A549 (cell line): ENCODE measurements at regions of chr7 and their contacts with region 1.

Region 1: GRCh38 chr7:73612598-73613269 is 11.6 kb downstream of the MLXIPL start:
- DNase-seq: peak; percentile 97 to 98
- ATAC-seq: peak; percentile 95
- H3K4me3 ChIP-seq: no peak overlapping the region
- H3K27ac ChIP-seq: peak overlapping the region; percentile 75 to 79
- H3K4me1 ChIP-seq: peaks cover 42% of the 10 kb centered on the region
- CTCF ChIP-seq: peak; percentile 77
- EP300 ChIP-seq: peak; percentile 62 to 75; a peak in 2 of 5 replicates
- POLR2A ChIP-seq: no peak
- RAD21 ChIP-seq: peak; percentile 87 to 93

Region 2: GRCh38 chr7:73623798-73624668 is 11.3 kb after region 1 on chr7 and contains the start of gene MLXIPL:
- CTCF ChIA-PET with region 1: interaction called, 98 read pairs
- POLR2A ChIA-PET with region 1: interaction called, 3 read pairs
- DNase-seq: peak; percentile 78 to 97
- ATAC-seq: peak; percentile 84 to 90
- H3K4me3 ChIP-seq: peak within 1 kb of the TSS; percentile 55
- H3K27ac ChIP-seq: peak within 1 kb of the TSS; percentile 71 to 92
- H3K4me1 ChIP-seq: peaks cover 25% of the 10 kb centered on the region
- CTCF ChIP-seq: no peak
- EP300 ChIP-seq: no peak
- POLR2A ChIP-seq: peak; percentile 48; the same call in 1 of the 2 replicates
- RAD21 ChIP-seq: no peak
- polyA plus RNA-seq, gene MLXIPL: 1.4 and 2.2 TPM in 2 replicates

Region 3: DNA sequence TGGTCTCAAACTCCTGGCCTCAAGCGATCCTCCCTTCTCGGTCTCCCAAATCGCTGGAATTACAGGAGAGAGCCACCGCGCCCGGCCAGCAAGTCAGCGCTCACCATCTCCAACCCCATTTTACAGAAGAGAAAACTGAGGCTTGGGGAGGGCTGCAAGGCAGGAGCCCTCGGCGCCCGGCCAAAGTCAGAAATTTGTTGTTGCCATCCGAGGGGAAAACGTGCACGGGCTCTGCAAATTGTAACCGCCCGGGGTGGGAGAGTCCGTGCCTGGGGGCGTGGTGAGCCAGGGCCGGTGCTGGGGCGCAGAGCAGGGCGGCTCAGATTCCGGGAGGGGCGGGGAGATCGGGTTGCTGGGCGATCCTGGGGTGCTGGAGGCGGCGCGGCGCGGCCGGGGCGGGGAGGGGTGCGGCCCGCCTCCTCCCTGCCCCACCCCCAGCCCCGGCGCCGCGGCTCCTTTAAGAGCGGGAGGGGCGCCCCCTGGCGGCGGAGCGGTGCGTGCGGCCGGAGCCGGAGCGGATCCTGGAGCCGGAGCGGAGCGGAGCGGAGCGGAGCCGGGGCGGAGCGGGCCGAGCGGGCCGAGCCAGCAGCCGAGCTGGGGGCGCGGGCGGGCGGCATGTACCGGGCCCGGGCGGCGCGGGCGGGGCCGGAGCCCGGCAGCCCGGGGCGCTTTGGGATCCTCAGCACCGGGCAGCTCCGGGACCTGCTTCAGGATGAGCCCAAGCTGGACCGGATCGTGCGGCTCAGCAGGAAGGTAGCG is 54.8 kb after region 1 on chr7 and contains the start of gene VPS37D:
- CTCF ChIA-PET with region 1: interaction called, 58 read pairs
- POLR2A ChIA-PET with region 1: interaction called, 5 read pairs
- DNase-seq: peak; percentile 85 to 89
- ATAC-seq: peak; percentile 82 to 91
- H3K4me3 ChIP-seq: peak within 1 kb of the TSS; percentile 90
- H3K27ac ChIP-seq: peak within 1 kb of the TSS; percentile 95
- H3K4me1 ChIP-seq: peaks cover 18% of the 10 kb centered on the region; the same call in 2 of the 3 replicates
- CTCF ChIP-seq: peak; percentile 97
- EP300 ChIP-seq: no peak
- POLR2A ChIP-seq: no peak
- RAD21 ChIP-seq: peak; percentile 71 to 94
- polyA plus RNA-seq, gene VPS37D: 3.3 and 3.8 TPM in 2 replicates

Region 4: DNA sequence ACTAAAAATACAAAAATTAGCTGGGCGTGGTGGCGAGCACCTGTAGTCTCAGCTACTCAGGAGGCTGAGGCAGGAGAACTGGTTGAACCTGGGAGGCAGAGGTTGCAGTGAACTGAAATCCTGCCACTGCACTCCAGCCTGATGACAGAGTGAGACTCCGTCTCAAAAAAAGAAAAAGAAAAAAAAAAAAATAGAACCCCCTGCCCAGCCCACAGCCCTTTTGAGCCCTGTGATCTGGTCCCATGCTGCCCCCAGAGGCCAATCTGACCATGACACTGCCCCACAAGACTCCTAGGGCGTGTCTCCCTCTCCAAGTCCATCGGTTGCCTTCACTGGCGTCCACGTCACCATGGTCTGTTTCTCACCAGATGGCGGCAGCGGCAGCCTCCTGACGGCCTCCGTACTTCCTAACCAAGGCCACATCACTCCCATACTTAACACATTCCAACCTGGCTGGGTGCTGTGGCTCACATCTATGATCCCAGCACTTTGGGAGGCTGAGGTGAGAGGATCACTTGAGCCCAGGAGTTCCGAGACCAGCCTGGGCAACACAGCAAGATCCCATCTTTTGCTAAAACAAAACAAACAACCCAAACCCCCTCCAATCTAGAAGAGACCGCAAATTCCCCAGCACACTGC is 88.7 kb after region 1 on chr7:
- CTCF ChIA-PET with region 1: interaction called, 71 read pairs
- POLR2A ChIA-PET with region 1: interaction called, 4 read pairs
- DNase-seq: peak; percentile 74 to 95
- ATAC-seq: peak in 1 of 2 experiments; percentile 24; a peak in 3 of 6 replicates
- H3K4me3 ChIP-seq: no peak overlapping the region
- H3K27ac ChIP-seq: peak overlapping the region; percentile 99 to 100
- H3K4me1 ChIP-seq: peaks cover 75% of the 10 kb centered on the region
- CTCF ChIP-seq: peak; percentile 55
- EP300 ChIP-seq: no peak
- POLR2A ChIP-seq: no peak
- RAD21 ChIP-seq: peak; percentile 53 to 70; a peak in 4 of 5 replicates

Region 5: GRCh38 chr7:73865738-73866445 is 253.2 kb after region 1 on chr7:
- CTCF ChIA-PET with region 1: no interaction called
- POLR2A ChIA-PET with region 1: no interaction called
- DNase-seq: peak; percentile 58 to 63
- ATAC-seq: peak; percentile 76 to 86; a peak in 4 of 6 replicates
- H3K4me3 ChIP-seq: no peak overlapping the region
- H3K27ac ChIP-seq: no peak overlapping the region
- H3K4me1 ChIP-seq: peaks cover 10% of the 10 kb centered on the region; the same call in 2 of the 3 replicates
- CTCF ChIP-seq: peak; percentile 81
- EP300 ChIP-seq: no peak
- POLR2A ChIP-seq: no peak
- RAD21 ChIP-seq: peak; percentile 88 to 91

Region 6: GRCh38 chr7:73918926-73919693 is 306.4 kb after region 1 on chr7:
- CTCF ChIA-PET with region 1: no interaction called
- POLR2A ChIA-PET with region 1: no interaction called
- DNase-seq: no peak
- ATAC-seq: no peak
- H3K4me3 ChIP-seq: no peak overlapping the region
- H3K27ac ChIP-seq: no peak overlapping the region
- H3K4me1 ChIP-seq: no peaks in the 10 kb centered on the region
- CTCF ChIP-seq: no peak
- EP300 ChIP-seq: no peak
- POLR2A ChIP-seq: no peak
- RAD21 ChIP-seq: no peak